A549 (cell line): ENCODE measurements at regions of chr1 and their contacts with region 1.

Region 1: DNA sequence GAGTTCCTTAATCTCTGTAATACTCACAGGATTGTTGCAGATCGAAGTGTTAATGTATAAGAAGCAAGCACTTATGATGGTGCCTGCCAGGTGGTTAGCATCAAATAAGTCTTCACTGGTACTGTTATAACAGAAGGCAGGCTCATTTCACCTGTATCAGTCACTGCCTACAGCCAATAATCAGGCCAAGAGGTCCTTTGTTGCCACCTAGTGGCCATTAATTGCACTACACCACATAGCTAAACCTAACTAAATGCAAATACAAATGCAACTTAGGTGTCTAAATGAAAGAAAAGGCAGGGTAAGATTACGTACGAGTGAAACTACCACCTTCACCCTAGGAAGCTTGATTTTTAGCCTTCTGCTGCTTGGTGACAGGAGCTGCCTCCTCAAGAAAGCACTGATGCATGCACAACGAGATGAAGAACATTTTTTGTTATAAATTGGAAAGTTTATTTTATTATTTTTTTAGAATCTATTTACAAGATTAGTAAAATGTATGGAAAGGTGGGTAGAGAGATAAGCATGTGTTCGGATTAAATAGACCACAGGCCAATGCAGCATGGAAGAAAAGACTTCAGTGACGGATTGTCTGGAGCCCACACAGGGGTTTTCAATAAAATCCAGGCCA is 334.8 kb upstream of the CAMK1G start:
- DNase-seq: peak; percentile 64 to 66
- ATAC-seq: peak; percentile 84 to 91; a peak in 5 of 6 replicates
- H3K4me3 ChIP-seq: no peak overlapping the region
- H3K27ac ChIP-seq: peak overlapping the region in 1 of 2 experiments; percentile 14; a peak in 1 of 6 replicates
- H3K4me1 ChIP-seq: peaks cover 11% of the 10 kb centered on the region; the same call in 1 of the 3 replicates
- CTCF ChIP-seq: peak; percentile 89
- EP300 ChIP-seq: no peak
- POLR2A ChIP-seq: no peak
- RAD21 ChIP-seq: peak; percentile 81 to 86

Region 2: GRCh38 chr1:208652296-208653160 is 596.2 kb before region 1 on chr1:
- CTCF ChIA-PET with region 1: interaction called, 28 read pairs
- POLR2A ChIA-PET with region 1: no interaction called
- DNase-seq: peak; percentile 18 to 56
- ATAC-seq: peak; percentile 89 to 94
- H3K4me3 ChIP-seq: no peak overlapping the region
- H3K27ac ChIP-seq: no peak overlapping the region
- H3K4me1 ChIP-seq: no peaks in the 10 kb centered on the region
- CTCF ChIP-seq: peak; percentile 76
- EP300 ChIP-seq: no peak
- POLR2A ChIP-seq: no peak
- RAD21 ChIP-seq: peak; percentile 64

Region 3: DNA sequence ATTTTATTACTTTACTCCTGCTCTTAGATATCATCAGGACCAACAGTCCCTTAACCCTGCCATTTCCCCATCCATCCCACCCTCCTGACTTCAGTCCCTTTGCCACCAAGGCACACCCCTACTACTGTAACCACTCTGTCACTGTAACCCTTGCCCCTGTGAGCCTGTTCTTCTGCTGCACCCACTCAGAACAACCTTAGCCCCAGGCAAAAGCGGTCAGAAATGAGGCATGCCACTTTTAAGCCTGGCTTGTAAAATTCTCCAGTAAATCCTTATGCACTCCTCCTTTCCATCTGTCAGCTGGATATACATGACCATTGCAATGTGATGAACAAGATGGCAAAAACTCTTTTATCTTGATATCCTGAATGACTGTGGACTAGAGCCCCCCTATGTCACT is 449.6 kb before region 1 on chr1:
- CTCF ChIA-PET with region 1: no interaction called
- POLR2A ChIA-PET with region 1: no interaction called
- DNase-seq: no peak
- ATAC-seq: no peak
- H3K4me3 ChIP-seq: no peak overlapping the region
- H3K27ac ChIP-seq: no peak overlapping the region
- H3K4me1 ChIP-seq: no peaks in the 10 kb centered on the region
- CTCF ChIP-seq: no peak
- EP300 ChIP-seq: no peak
- POLR2A ChIP-seq: no peak
- RAD21 ChIP-seq: no peak

Region 4: GRCh38 chr1:209207701-209208286 is 41.0 kb before region 1 on chr1:
- CTCF ChIA-PET with region 1: interaction called, 26 read pairs
- POLR2A ChIA-PET with region 1: no interaction called
- DNase-seq: peak; percentile 38 to 45
- ATAC-seq: peak; percentile 91 to 97
- H3K4me3 ChIP-seq: peak overlapping the region; percentile 22; the same call in 1 of the 3 replicates
- H3K27ac ChIP-seq: peak overlapping the region in 1 of 2 experiments; percentile 63; a peak in 3 of 6 replicates
- H3K4me1 ChIP-seq: no peaks in the 10 kb centered on the region
- CTCF ChIP-seq: peak; percentile 74
- EP300 ChIP-seq: no peak
- POLR2A ChIP-seq: no peak
- RAD21 ChIP-seq: peak; percentile 74 to 84

Region 5: DNA sequence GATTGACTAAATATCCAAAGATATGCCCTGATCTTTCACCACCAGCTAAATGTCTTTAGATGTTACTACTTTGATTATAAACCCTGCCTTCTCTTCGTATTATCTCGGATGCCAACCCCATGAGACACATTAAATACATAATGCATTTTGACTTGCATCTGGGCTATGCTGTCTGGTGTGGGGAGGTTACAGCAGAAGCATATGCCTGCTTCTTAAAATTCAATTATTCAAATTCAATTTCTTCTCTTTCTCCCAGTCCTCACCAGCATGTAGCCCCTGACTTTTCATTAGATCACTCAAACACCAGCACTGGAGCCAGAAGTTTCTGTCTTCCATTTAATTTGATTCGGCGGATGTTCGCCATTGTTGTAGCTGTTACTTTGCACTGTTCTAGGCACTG is 25.9 kb before region 1 on chr1:
- CTCF ChIA-PET with region 1: interaction called, 11 read pairs
- POLR2A ChIA-PET with region 1: no interaction called
- DNase-seq: no peak
- ATAC-seq: no peak
- H3K4me3 ChIP-seq: no peak overlapping the region
- H3K27ac ChIP-seq: no peak overlapping the region
- H3K4me1 ChIP-seq: no peaks in the 10 kb centered on the region
- CTCF ChIP-seq: no peak
- EP300 ChIP-seq: no peak
- POLR2A ChIP-seq: no peak
- RAD21 ChIP-seq: no peak

Region 6: DNA sequence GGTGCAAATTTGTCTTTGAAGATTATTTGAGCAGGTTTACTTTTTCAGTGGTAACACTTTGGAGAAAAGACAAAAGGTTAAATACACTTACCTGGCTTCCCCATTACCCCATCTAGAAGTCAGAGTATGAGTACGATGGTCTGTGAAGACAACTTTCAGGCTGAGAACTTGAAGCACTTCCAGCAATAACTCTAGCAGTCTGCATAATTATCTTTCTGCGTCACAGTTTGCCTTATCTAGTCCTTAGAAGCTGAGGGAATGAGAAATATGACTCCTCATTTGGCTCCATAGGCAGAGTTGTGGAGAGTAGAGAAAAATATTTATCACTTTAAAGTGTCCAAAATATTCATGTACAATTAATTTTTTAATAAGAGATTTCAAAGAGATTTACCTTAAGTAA is 11.4 kb after region 1 on chr1:
- CTCF ChIA-PET with region 1: interaction called, 12 read pairs
- POLR2A ChIA-PET with region 1: no interaction called
- DNase-seq: no peak
- ATAC-seq: no peak
- H3K4me3 ChIP-seq: no peak overlapping the region
- H3K27ac ChIP-seq: no peak overlapping the region
- H3K4me1 ChIP-seq: no peaks in the 10 kb centered on the region
- CTCF ChIP-seq: no peak
- EP300 ChIP-seq: no peak
- POLR2A ChIP-seq: no peak
- RAD21 ChIP-seq: no peak

Region 7: GRCh38 chr1:209435654-209436566 is 187.1 kb after region 1 on chr1:
- CTCF ChIA-PET with region 1: interaction called, 13 read pairs
- POLR2A ChIA-PET with region 1: no interaction called
- DNase-seq: peak; percentile 77 to 92
- ATAC-seq: peak; percentile 95 to 99
- H3K4me3 ChIP-seq: no peak overlapping the region
- H3K27ac ChIP-seq: peak overlapping the region; percentile 29 to 63; a peak in 5 of 6 replicates
- H3K4me1 ChIP-seq: peaks cover 22% of the 10 kb centered on the region
- CTCF ChIP-seq: peak; percentile 83
- EP300 ChIP-seq: no peak
- POLR2A ChIP-seq: no peak
- RAD21 ChIP-seq: peak; percentile 91 to 92